WTC11 (cell line): ENCODE measurements at regions of chr12 and their contacts with region 1.

Region 1: GRCh38 chr12:91326058-91327027 is 143.7 kb upstream of the DCN start:
- DNase-seq: peak; percentile 21
- ATAC-seq: peak; percentile 71
- H3K4me3 Mint-ChIP-seq: no peak overlapping the region
- H3K27ac Mint-ChIP-seq: no peak overlapping the region
- H3K4me1 Mint-ChIP-seq: no peaks in the 10 kb centered on the region
- H3K27me3 Mint-ChIP-seq: no peaks in the 10 kb centered on the region
- CTCF ChIP-seq: peak; percentile 69

Region 2: GRCh38 chr12:90970473-90970872 is 355.9 kb before region 1 on chr12:
- CTCF ChIA-PET with region 1: interaction called, 10 read pairs
- POLR2A ChIA-PET with region 1: no interaction called
- DNase-seq: no peak
- ATAC-seq: no peak
- H3K4me3 Mint-ChIP-seq: no peak overlapping the region
- H3K27ac Mint-ChIP-seq: no peak overlapping the region
- H3K4me1 Mint-ChIP-seq: peaks cover 11% of the 10 kb centered on the region
- H3K27me3 Mint-ChIP-seq: no peaks in the 10 kb centered on the region
- CTCF ChIP-seq: no peak

Region 3: DNA sequence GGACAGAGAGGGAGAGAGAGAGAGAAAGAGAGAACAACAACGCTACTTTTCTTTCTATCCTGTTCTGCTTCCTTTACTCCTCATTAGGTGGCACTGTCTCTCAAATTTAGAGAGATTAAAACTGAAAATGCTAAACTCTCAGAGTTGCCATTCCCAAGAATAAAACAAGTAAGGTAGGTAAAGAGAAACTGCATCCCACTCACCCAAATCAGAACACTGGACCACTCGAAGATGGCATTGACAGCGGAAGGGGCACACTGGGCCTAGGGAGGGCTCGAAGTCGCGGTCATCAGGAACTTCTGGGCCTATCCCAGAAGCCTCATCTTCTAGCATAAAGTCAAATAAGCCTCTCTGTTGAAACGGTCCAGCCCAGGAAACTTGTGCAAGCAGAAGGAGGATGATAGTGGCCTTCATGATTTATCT is 148.2 kb before region 1 on chr12:
- CTCF ChIA-PET with region 1: interaction called, 11 read pairs
- POLR2A ChIA-PET with region 1: no interaction called
- DNase-seq: no peak
- ATAC-seq: peak; percentile 80
- H3K4me3 Mint-ChIP-seq: no peak overlapping the region
- H3K27ac Mint-ChIP-seq: peak overlapping the region; percentile 17; the same call in 1 of the 2 replicates
- H3K4me1 Mint-ChIP-seq: peaks cover 11% of the 10 kb centered on the region
- H3K27me3 Mint-ChIP-seq: no peaks in the 10 kb centered on the region
- CTCF ChIP-seq: no peak